HEK293 (cell line): ENCODE measurements at regions of chr4 and their contacts with region 1.

Region 1: GRCh38 chr4:40325189-40326019 is 9.7 kb upstream of the CHRNA9 start:
- H3K4me3 ChIP-seq: no peak overlapping the region
- H3K27ac ChIP-seq: no peak overlapping the region
- H3K4me1 ChIP-seq: 0 out of 2 replicates have a peak, but pooled peaks cover 3% of the 10 kb centered on the region
- CTCF ChIP-seq: no peak; the same call in none of the 2 replicates

Region 2: DNA sequence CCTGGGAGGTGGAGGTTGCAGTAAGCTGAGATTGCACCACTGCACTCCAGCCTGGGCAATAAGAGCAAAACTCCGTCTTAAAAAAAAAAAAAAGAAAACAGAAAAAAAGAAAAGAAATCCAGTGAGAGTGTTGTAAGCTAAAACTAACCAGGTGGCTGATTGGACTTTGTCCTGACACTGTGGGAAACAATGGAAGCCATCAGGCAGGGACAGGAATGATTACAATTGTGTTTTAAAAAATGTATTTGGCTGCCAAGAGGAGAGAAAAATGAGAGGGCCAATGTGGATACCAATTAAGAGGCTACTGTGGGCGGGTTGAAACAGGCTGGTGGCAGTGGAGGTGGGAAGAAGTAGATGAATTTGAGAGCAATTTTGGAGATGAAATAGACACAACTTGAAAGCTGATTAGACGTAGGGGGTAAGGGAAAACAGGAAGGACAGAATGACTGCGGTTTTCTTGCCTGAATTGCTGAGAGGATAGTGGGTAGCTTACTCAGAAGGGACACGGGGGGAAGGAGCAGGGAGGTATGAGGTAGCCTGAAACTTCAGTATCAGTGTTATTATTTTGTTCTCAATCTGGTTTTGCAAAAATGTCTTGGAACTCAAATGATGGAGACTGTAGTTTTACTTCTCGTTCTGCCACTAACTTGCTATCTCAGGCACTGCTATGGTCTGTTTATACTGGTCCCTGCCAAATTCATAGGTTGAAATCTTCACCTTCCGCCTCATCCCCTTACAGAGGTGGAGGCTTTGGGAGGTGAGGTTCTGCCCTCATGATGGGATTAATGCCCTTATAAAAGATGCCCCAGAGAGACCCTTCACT is 35.8 kb before region 1 on chr4:
- CTCF ChIA-PET with region 1: interaction called, 12 read pairs
- POLR2A ChIA-PET with region 1: no interaction called
- H3K4me3 ChIP-seq: no peak overlapping the region
- H3K27ac ChIP-seq: no peak overlapping the region
- H3K4me1 ChIP-seq: no peaks in the 10 kb centered on the region
- CTCF ChIP-seq: no peak

Region 3: DNA sequence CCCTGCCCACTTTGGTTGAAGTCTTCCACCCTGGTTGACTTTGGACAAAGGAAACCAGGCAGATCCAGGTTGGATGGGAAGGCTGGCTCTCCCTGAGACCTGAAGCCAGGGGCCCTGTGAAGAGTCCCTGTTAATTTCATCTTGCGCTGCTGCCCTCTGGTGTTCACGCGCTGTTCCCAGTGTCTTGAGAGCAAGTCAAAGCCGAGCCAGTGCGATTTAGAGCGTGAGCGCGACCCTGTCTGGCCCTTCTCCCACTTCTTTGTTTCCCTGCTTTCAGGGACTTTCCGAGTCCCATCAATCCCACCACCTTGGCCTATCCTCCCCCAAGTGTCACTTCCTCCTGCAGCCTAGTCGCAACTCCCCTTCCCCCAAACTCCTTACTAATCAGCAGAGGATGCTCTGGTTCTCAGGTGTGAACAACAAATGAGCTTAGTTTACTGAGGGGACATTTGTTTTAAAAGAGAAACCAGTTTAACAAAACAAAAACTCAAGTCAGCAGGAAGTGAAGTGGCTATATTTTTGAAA is 16.1 kb before region 1 on chr4:
- CTCF ChIA-PET with region 1: interaction called, 10 read pairs
- POLR2A ChIA-PET with region 1: no interaction called
- H3K4me3 ChIP-seq: no peak overlapping the region
- H3K27ac ChIP-seq: no peak overlapping the region
- H3K4me1 ChIP-seq: no peaks in the 10 kb centered on the region
- CTCF ChIP-seq: peak; percentile 55; the same call in 1 of the 2 replicates

Region 4: GRCh38 chr4:40486534-40486933 is 161.1 kb after region 1 on chr4:
- CTCF ChIA-PET with region 1: no interaction called
- POLR2A ChIA-PET with region 1: no interaction called
- H3K4me3 ChIP-seq: no peak overlapping the region
- H3K27ac ChIP-seq: no peak overlapping the region
- H3K4me1 ChIP-seq: no peaks in the 10 kb centered on the region
- CTCF ChIP-seq: no peak